ENCODE measurements at regions of chr11 and their contacts with region 1.

Region 1: DNA sequence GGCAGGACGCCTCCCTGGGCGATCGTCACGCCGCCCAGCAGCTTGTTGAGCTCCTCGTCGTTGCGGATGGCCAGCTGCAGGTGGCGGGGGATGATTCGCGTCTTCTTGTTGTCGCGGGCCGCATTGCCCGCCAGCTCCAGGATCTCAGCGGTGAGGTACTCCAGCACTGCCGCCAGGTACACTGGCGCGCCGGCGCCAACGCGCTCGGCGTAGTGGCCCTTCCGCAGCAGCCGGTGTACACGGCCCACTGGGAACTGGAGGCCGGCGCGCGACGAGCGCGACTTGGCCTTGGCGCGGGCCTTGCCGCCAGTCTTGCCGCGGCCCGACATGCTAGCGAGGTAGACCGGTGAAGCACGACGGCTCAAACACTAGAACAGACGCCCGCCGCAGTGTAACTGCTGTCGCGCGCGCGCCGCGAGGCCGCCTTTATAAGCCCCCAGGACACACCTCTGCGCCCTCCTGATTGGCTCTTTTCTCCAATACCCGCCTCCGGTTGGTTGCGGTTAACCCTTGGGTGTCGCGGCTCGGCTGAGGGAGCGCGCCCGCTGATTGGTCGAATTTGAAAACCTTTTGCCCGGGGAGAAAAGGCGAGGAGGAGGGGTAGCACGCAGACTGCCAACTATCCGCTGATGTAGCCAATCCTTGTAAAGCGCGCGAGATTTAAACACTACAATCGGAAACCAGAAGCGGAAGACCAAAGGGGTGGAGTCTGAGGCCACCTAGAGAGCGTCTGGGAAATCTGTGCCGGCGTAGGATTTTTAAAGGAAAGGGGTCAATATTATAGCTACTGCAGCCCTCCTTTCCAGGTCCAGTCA is 6.4 kb downstream of the DPAGT1 start:
- DNase-seq: peak; percentile 100
- H3K4me3 Mint-ChIP-seq: peak overlapping the region; percentile 92
- H3K27ac Mint-ChIP-seq: peak overlapping the region; percentile 96
- H3K4me1 Mint-ChIP-seq: peaks cover 39% of the 10 kb centered on the region
- H3K27me3 Mint-ChIP-seq: no peaks in the 10 kb centered on the region

Region 2: DNA sequence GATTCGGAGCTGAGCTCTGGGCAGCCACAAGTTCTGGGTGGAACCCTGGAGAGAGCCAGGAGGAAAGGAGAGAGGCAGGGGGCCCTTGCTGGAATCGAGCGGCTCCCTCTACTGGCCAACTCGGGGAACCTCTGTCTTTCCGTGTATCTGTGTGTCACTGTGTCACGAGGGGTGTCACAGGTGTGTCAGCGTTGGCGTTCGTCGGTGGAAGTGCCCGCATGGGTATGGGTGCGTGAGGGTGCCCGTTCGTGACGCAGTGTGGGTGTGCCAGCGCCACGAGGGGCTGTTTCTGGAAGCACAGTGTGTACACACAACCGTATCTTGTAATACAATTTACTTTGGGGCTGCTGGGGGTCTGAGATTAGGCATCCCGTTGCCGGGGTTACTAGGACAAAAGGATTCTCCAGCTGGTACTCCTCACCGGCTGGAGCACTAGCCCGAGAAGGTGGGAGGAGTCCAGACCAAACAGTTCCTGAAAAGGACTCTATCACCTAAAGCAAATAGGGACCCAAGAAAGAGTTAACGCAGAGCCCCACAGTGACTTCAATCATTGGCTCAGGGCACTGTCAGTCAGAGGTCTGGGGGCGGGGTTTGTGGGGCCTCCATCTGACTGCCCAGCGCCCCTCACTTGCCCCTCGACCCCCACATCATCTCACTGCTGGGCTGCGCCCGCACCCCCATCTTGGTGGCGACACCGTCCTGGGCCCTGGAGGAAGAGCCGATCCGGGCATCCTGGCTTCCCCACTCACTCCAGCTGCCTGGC is 167.0 kb before region 1 on chr11:
- CTCF ChIA-PET with region 1: no interaction called
- intact Hi-C with region 1: loop called (anchors 2 kb)
- DNase-seq: peak; percentile 96
- H3K4me3 Mint-ChIP-seq: peak overlapping the region; percentile 96
- H3K27ac Mint-ChIP-seq: peak overlapping the region; percentile 95
- H3K4me1 Mint-ChIP-seq: peaks cover 37% of the 10 kb centered on the region
- H3K27me3 Mint-ChIP-seq: no peaks in the 10 kb centered on the region

Region 3: DNA sequence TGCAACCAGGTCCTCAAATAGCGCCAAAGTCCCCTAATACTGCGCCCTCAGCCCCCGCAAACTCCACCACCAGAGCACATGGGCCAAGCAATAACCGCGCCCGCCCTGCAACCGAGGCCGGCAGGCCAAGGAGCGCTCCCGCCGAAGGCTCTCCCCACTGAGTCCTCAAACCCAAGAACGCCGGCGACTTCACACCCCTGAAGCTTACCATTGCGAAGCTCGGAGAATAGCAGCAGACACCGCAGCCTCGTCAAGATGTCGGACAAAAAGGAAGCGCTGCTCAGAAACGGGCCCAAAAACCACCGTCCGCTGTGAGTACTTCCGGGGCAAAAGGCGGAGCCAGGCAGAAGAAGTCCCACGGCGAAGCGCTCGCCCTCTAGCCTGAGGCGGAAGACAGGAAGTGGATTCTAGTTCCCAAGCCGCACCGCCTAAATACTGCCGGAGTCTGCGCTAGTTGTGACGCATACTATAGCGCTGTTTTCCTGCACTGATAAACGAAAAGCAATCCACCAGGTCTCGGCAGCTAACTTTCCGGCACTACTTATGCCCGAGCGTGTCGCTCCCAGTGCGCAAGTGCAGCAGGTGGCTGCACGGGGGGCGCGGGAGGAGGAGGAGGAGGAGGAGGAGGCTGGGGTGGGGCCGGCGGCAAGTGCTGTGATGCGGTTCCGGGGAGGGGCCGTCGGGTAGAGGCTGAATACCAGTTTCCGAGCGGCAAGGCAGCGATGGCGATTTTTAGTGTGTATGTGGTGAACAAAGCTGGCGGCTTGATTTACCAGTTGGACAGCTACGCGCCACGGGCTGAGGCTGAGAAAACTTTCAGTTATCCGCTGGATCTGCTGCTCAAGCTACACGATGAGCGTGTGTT is 77.0 kb before region 1 on chr11 and contains the starts of genes RPS25 and TRAPPC4:
- CTCF ChIA-PET with region 1: interaction called, 4 read pairs
- intact Hi-C with region 1: loop called (anchors 1 kb)
- DNase-seq: peak; percentile 98
- H3K4me3 Mint-ChIP-seq: peak within 1 kb of the TSS; percentile 98
- H3K27ac Mint-ChIP-seq: peak within 1 kb of the TSS; percentile 99
- H3K4me1 Mint-ChIP-seq: peaks cover 59% of the 10 kb centered on the region
- H3K27me3 Mint-ChIP-seq: no peaks in the 10 kb centered on the region
- total RNA-seq, gene RPS25: 2,183 to 2,206 TPM
- total RNA-seq, gene TRAPPC4: 66.4 to 69.9 TPM

Region 4: GRCh38 chr11:119057000-119057769 is 38.1 kb before region 1 on chr11 and contains the start of gene HYOU1:
- CTCF ChIA-PET with region 1: interaction called, 3 read pairs
- intact Hi-C with region 1: loop called (anchors 2 kb)
- DNase-seq: peak; percentile 99
- H3K4me3 Mint-ChIP-seq: peak within 1 kb of the TSS; percentile 98
- H3K27ac Mint-ChIP-seq: peak within 1 kb of the TSS; percentile 95
- H3K4me1 Mint-ChIP-seq: peaks cover 53% of the 10 kb centered on the region
- H3K27me3 Mint-ChIP-seq: no peaks in the 10 kb centered on the region
- total RNA-seq, gene HYOU1: 108 to 116 TPM

Region 5: GRCh38 chr11:119084663-119085436 is 10.4 kb before region 1 on chr11 and contains the start of gene HMBS:
- CTCF ChIA-PET with region 1: interaction called, 8 read pairs
- intact Hi-C with region 1: loop called (anchors 1 kb)
- DNase-seq: peak; percentile 94
- H3K4me3 Mint-ChIP-seq: peak within 1 kb of the TSS; percentile 98
- H3K27ac Mint-ChIP-seq: peak within 1 kb of the TSS; percentile 96
- H3K4me1 Mint-ChIP-seq: peaks cover 21% of the 10 kb centered on the region
- H3K27me3 Mint-ChIP-seq: no peaks in the 10 kb centered on the region
- total RNA-seq, gene HMBS: 27.9 to 29.4 TPM

Region 6: DNA sequence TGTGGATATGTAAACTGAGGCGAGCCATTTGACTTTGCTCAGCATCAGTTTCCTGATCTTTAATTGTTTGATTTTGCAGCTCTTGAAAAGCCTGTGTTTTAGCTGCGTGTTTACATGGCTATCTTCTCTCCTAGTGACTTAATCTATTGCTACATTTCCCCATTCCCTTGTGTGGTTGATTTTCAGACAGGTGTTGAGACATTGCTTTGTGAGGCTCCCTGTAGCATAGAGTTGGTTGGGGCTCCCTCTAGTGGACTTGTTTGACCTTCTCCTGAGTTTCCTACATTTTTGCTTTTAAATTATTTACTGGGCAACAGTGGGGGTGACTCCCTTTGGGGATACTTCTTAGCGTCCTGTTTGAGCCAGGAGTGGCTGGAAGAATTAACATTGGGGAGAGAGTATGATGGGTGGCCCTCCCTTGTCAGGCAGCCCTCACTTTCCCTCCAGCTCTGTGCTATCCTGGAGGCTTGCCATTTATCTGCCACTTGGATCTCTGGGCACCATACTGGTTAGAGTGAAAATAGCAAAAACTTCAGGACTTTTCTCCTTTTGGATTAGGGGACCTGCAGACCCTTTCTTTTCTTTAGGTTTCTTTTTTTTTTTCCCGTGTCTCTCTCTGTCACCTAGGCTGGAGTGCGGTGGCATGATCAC is 101.7 kb after region 1 on chr11:
- CTCF ChIA-PET with region 1: interaction called, 6 read pairs
- intact Hi-C with region 1: loop called (anchors 1 kb)
- DNase-seq: peak; percentile 88
- H3K4me3 Mint-ChIP-seq: no peak overlapping the region
- H3K27ac Mint-ChIP-seq: no peak overlapping the region
- H3K4me1 Mint-ChIP-seq: no peaks in the 10 kb centered on the region
- H3K27me3 Mint-ChIP-seq: no peaks in the 10 kb centered on the region

Region 7: GRCh38 chr11:119210050-119210449 is 114.8 kb after region 1 on chr11:
- CTCF ChIA-PET with region 1: no interaction called
- intact Hi-C with region 1: no loop called
- DNase-seq: no peak
- H3K4me3 Mint-ChIP-seq: no peak overlapping the region
- H3K27ac Mint-ChIP-seq: no peak overlapping the region
- H3K4me1 Mint-ChIP-seq: peaks cover 47% of the 10 kb centered on the region
- H3K27me3 Mint-ChIP-seq: no peaks in the 10 kb centered on the region

Measured in activated naive CD4-positive, alpha-beta T cell treated with anti-CD3 and anti-CD28 coated beads for 36 hours (primary cell).